ENCODE measurements at regions of chr7 and their contacts with region 1.

Region 1: DNA sequence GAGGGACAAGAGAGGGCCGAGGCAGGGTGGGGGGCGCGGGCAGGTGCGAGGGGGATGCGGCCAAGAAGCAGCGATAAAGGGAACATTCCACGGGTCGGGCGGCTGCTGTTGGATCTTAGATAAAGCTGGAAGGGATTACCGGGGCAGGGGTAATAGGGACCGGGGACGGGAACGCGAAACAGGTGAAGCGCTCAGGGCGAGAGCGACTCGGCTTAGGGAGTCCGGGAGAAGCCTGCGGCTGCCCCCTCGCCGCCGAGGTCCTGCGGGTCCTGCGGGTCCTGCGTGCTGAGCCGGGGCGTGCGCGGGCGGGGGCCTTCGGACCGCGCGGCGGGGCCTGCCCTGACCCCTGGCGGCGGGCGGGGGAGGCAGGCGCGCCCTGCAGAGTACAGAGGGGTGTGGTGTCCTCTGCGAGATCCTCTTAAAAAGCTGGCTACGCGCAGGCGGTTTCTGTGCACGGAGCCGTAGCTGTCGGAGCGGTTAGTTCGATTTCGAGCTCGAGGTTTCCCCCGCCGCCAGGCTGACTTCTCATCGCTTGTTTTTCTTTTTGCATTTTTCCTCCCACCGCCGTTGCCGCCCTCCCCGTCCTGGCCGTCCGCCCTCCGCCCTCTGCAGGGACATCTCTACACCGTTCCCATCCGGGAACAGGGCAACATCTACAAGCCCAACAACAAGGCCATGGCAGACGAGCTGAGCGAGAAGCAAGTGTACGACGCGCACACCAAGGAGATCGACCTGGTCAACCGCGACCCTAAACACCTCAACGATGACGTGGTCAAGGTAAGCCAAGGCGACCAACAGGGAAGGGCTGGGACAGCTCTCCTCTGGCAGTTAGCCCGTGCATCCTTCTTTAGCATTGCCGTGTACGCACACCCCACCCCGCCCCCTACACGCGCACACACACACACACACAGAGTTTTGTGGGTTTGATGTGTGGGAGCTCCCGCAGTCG is 1.4 kb downstream of the CAV1 start:
- DNase-seq: peak; percentile 83
- ATAC-seq: peak; percentile 92
- H3K4me3 ChIP-seq: peak overlapping the region; percentile 3 to 84 (median 73)
- H3K4me3 Mint-ChIP-seq: peak overlapping the region; percentile 96
- H3K27ac ChIP-seq: no peak overlapping the region
- H3K27ac Mint-ChIP-seq: peak overlapping the region; percentile 65
- H3K4me1 ChIP-seq: peaks cover 12 to 27% of the 10 kb centered on the region in 2 donors
- H3K4me1 Mint-ChIP-seq: peaks cover 26% of the 10 kb centered on the region
- H3K27me3 ChIP-seq: peaks cover 0 to 42% (median 28%) of the 10 kb centered on the region in 4 experiments
- H3K27me3 Mint-ChIP-seq: peaks cover 46% of the 10 kb centered on the region
- CTCF ChIP-seq: peak; percentile 87

Region 2: DNA sequence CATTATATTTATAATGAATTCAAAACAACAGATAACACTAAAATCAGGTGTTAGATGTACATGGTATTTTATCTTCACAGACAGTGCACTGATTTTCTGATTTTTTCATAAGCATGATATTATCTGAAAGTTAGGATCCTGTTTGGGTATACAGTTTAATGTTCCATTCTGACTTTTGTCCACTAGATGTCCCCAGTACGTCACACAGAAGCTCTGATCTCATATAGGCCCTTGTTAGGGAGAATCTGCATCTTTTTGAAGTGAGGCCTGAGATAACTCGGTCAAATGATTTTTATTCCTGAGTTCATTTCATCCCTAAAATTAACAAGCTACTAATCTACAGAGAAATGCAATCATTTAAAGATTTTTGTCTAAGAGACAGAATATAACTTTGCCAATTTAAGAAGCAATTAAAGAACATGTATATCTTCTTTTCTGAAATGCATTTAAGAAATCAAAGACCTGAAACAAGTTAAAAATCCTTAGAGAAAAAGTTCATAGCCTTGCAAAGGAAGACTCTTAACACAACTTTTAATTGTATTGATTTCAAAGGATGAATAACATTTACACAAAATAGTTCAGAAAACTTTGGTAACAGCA is 387.9 kb before region 1 on chr7:
- CTCF ChIA-PET with region 1: interaction called, 3 read pairs
- POLR2A ChIA-PET with region 1: no interaction called
- intact Hi-C with region 1: loop called (anchors 1 kb)
- DNase-seq: peak; percentile 74
- ATAC-seq: peak; percentile 85
- H3K4me3 ChIP-seq: no peak overlapping the region
- H3K4me3 Mint-ChIP-seq: no peak overlapping the region
- H3K27ac ChIP-seq: no peak overlapping the region
- H3K27ac Mint-ChIP-seq: no peak overlapping the region
- H3K4me1 ChIP-seq: peaks cover 6 to 7% of the 10 kb centered on the region in 2 donors
- H3K4me1 Mint-ChIP-seq: peaks cover 23% of the 10 kb centered on the region
- H3K27me3 ChIP-seq: no peaks in the 10 kb centered on the region
- H3K27me3 Mint-ChIP-seq: no peaks in the 10 kb centered on the region
- CTCF ChIP-seq: peak; percentile 89

Region 3: DNA sequence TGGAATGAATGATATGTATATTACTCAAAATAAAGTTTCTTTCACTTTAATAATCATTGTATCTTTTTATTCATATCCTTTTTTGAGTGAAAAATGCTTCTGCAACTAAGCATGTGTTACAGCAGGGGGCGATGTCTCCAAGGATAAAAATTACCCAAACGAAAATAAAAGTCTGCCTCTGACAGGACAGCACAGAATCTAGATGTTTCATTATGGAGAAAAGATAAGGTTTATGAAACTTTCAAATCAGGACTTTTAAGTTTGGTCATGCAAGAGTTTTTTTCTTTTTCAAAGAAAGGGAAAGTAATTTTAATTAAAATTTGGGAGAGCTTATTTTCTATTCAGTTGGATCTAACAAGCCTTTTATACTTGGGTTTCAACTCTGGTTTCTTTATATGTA is 267.5 kb before region 1 on chr7:
- CTCF ChIA-PET with region 1: interaction called, 48 read pairs
- POLR2A ChIA-PET with region 1: no interaction called
- intact Hi-C with region 1: loop called (anchors 1 kb)
- DNase-seq: peak; percentile 63
- ATAC-seq: peak; percentile 51
- H3K4me3 ChIP-seq: no peak overlapping the region
- H3K4me3 Mint-ChIP-seq: no peak overlapping the region
- H3K27ac ChIP-seq: no peak overlapping the region
- H3K27ac Mint-ChIP-seq: no peak overlapping the region
- H3K4me1 ChIP-seq: no peaks in the 10 kb centered on the region
- H3K4me1 Mint-ChIP-seq: peaks cover 2% of the 10 kb centered on the region
- H3K27me3 ChIP-seq: no peaks in the 10 kb centered on the region
- H3K27me3 Mint-ChIP-seq: no peaks in the 10 kb centered on the region
- CTCF ChIP-seq: peak; percentile 86

Region 4: GRCh38 chr7:116277070-116277469 is 249.1 kb before region 1 on chr7:
- CTCF ChIA-PET with region 1: no interaction called
- POLR2A ChIA-PET with region 1: no interaction called
- intact Hi-C with region 1: no loop called
- DNase-seq: no peak
- ATAC-seq: no peak
- H3K4me3 ChIP-seq: no peak overlapping the region
- H3K4me3 Mint-ChIP-seq: no peak overlapping the region
- H3K27ac ChIP-seq: no peak overlapping the region
- H3K27ac Mint-ChIP-seq: no peak overlapping the region
- H3K4me1 ChIP-seq: no peaks in the 10 kb centered on the region
- H3K4me1 Mint-ChIP-seq: no peaks in the 10 kb centered on the region
- H3K27me3 ChIP-seq: no peaks in the 10 kb centered on the region
- H3K27me3 Mint-ChIP-seq: peaks cover 8% of the 10 kb centered on the region
- CTCF ChIP-seq: no peak

Region 5: GRCh38 chr7:116487907-116488521 is 38.2 kb before region 1 on chr7:
- CTCF ChIA-PET with region 1: no interaction called
- POLR2A ChIA-PET with region 1: no interaction called
- intact Hi-C with region 1: no loop called
- DNase-seq: no peak
- ATAC-seq: no peak
- H3K4me3 ChIP-seq: no peak overlapping the region
- H3K4me3 Mint-ChIP-seq: no peak overlapping the region
- H3K27ac ChIP-seq: no peak overlapping the region
- H3K27ac Mint-ChIP-seq: no peak overlapping the region
- H3K4me1 ChIP-seq: no peaks in the 10 kb centered on the region
- H3K4me1 Mint-ChIP-seq: no peaks in the 10 kb centered on the region
- H3K27me3 ChIP-seq: peaks cover 0 to 5% (median 2%) of the 10 kb centered on the region in 4 experiments
- H3K27me3 Mint-ChIP-seq: peaks cover 48% of the 10 kb centered on the region
- CTCF ChIP-seq: no peak

Region 6: DNA sequence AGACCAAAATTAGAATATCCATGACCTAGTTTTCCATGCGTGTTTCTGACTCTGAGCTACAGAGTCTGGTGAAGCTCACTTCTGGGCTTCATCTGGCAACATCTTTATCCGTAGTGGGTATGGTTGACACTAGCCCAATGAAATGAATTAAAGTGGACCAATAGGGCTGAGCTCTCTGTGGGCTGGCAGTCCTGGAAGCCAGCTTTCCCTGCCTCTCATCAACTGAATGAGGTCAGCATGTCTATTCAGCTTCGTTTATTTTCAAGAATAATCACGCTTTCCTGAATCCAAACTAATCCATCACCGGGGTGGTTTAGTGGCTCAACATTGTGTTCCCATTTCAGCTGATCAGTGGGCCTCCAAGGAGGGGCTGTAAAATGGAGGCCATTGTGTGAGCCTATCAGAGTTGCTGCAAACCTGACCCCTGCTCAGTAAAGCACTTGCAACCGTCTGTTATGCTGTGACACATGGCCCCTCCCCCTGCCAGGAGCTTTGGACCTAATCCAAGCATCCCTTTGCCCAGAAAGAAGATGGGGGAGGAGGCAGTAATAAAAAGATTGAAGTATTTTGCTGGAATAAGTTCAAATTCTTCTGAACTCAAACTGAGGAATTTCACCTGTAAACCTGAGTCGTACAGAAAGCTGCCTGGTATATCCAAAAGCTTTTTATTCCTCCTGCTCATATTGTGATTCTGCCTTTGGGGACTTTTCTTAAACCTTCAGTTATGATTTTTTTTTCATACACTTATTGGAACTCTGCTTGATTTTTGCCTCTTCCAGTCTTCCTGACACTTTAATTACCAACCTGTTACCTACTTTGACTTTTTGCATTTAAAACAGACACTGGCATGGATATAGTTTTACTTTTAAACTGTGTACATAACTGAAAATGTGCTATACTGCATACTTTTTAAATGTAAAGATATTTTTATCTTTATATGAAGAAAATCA is 34.1 kb after region 1 on chr7:
- CTCF ChIA-PET with region 1: interaction called, 7 read pairs
- POLR2A ChIA-PET with region 1: no interaction called
- intact Hi-C with region 1: loop called (anchors 5 kb)
- DNase-seq: no peak
- ATAC-seq: no peak
- H3K4me3 ChIP-seq: no peak overlapping the region
- H3K4me3 Mint-ChIP-seq: no peak overlapping the region
- H3K27ac ChIP-seq: no peak overlapping the region
- H3K27ac Mint-ChIP-seq: no peak overlapping the region
- H3K4me1 ChIP-seq: peaks cover 2 to 4% of the 10 kb centered on the region in 2 donors
- H3K4me1 Mint-ChIP-seq: peaks cover 7% of the 10 kb centered on the region
- H3K27me3 ChIP-seq: peaks cover 0 to 12% (median 3%) of the 10 kb centered on the region in 4 experiments
- H3K27me3 Mint-ChIP-seq: peaks cover 39% of the 10 kb centered on the region
- CTCF ChIP-seq: no peak

Region 7: GRCh38 chr7:116683786-116684185 is 157.6 kb after region 1 on chr7:
- CTCF ChIA-PET with region 1: no interaction called
- POLR2A ChIA-PET with region 1: no interaction called
- intact Hi-C with region 1: no loop called
- DNase-seq: peak; percentile 69
- ATAC-seq: peak; percentile 98
- H3K4me3 ChIP-seq: no peak overlapping the region
- H3K4me3 Mint-ChIP-seq: no peak overlapping the region
- H3K27ac ChIP-seq: no peak overlapping the region
- H3K27ac Mint-ChIP-seq: no peak overlapping the region
- H3K4me1 ChIP-seq: peaks cover 7 to 26% of the 10 kb centered on the region in 2 donors
- H3K4me1 Mint-ChIP-seq: peaks cover 18% of the 10 kb centered on the region
- H3K27me3 ChIP-seq: peaks cover 1 to 88% (median 67%) of the 10 kb centered on the region in 4 experiments
- H3K27me3 Mint-ChIP-seq: peaks cover 76% of the 10 kb centered on the region
- CTCF ChIP-seq: no peak

Region 8: GRCh38 chr7:116953727-116954442 is 427.7 kb after region 1 on chr7:
- CTCF ChIA-PET with region 1: no interaction called
- POLR2A ChIA-PET with region 1: no interaction called
- intact Hi-C with region 1: loop called (anchors 10 kb)
- DNase-seq: no peak
- ATAC-seq: peak; percentile 70
- H3K4me3 ChIP-seq: peak overlapping the region; percentile 56 to 80 (median 71)
- H3K4me3 Mint-ChIP-seq: peak overlapping the region; percentile 97
- H3K27ac ChIP-seq: peak overlapping the region; percentile 33 to 43
- H3K27ac Mint-ChIP-seq: peak overlapping the region; percentile 93
- H3K4me1 ChIP-seq: peaks cover 12 to 13% of the 10 kb centered on the region in 2 donors
- H3K4me1 Mint-ChIP-seq: peaks cover 20% of the 10 kb centered on the region
- H3K27me3 ChIP-seq: peaks cover 0 to 19% (median 2%) of the 10 kb centered on the region in 4 experiments
- H3K27me3 Mint-ChIP-seq: peaks cover 3% of the 10 kb centered on the region
- CTCF ChIP-seq: no peak

Measured in B cell (primary cell).